ENCODE measurements at regions of chr3 and their contacts with region 1.

Region 1: DNA sequence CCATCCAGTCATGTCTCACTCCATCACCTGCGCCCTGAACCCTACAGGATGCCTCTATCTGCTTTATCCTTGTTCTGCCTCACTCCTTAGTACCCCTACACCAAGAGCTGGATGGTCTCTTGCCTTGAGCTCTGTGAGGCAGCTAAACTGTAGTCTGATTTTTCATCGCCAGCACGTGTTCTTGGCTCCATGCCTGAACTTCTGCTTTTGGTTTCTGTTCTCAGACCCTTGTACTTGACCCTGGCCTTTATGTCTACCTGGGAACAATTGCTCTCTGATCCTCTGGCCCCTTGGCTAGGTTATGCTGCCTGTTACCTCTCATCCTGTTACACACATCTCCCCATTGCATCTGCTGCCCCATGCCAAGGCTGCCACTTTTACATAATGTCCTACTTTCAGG is 318.0 kb upstream of the LMCD1 start:
- DNase-seq: no peak
- H3K4me3 ChIP-seq: no peak overlapping the region
- H3K27ac ChIP-seq: no peak overlapping the region
- H3K4me1 ChIP-seq: no peaks in the 10 kb centered on the region
- H3K27me3 ChIP-seq: no peaks in the 10 kb centered on the region
- CTCF ChIP-seq: no peak
- POLR2A ChIP-seq: no peak

Region 2: DNA sequence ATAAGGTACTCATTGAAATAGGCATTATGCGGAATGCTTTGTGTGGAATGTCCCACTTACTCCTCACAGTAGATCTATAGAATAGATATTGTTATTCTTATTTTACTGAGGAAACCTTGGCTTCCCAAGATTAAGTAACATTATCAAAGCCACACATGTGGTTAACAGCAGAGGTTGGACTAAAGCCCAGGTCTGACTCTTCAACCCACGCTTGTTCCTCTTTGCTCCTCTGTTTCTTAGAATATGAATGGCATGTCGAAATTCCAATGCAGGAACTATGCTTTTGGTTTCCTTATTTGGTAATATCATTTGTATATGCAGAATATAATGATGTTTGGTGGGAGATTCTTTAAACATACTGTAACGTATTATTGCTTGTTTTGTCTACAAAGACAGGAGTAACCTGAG is 500.8 kb before region 1 on chr3:
- intact Hi-C with region 1: no loop called
- DNase-seq: peak in 1 of 2 donors; percentile 75
- H3K4me3 ChIP-seq: no peak overlapping the region
- H3K27ac ChIP-seq: peak overlapping the region; percentile 54 to 72
- H3K4me1 ChIP-seq: no peaks in the 10 kb centered on the region
- H3K27me3 ChIP-seq: no peaks in the 10 kb centered on the region
- CTCF ChIP-seq: no peak
- POLR2A ChIP-seq: no peak

Region 3: DNA sequence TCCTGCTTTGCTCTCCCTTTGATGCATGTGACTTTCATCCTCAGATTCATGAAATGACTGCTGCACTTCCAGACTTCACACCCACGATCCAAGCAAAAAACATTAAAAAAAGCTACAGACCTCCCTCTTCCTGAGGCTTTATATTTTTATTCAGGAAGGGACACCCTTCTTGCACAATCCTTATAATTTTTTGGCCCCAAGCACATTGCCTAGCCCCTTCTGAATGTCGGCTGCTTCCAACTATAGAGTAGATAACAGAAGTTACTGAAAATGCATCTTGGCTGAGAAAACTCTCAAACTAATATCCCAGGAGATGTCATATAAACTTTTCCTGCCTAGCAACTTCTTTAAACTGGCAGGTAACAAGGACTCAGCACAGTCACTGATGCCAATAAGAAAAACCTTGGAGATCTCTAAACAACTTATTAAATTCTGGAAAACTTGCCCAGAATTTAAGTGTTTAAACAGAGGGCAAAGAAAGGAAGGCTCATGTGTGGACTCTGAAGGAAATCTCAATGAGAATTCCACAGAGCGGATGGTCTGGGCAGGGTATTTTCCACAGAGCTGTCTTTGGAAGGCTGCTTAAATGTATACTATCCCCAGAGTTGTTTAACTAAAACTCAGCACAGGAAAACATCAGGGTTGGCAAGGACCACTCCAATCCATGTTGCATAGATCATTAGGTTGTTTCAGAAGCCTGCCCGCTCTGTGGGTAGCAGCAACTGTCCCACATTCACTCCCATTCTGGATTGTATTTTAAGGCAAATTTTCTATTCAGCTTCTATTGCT is 428.8 kb before region 1 on chr3:
- intact Hi-C with region 1: loop called (anchors 5 kb)
- DNase-seq: no peak
- H3K4me3 ChIP-seq: no peak overlapping the region
- H3K27ac ChIP-seq: no peak overlapping the region
- H3K4me1 ChIP-seq: no peaks in the 10 kb centered on the region
- H3K27me3 ChIP-seq: no peaks in the 10 kb centered on the region
- CTCF ChIP-seq: no peak
- POLR2A ChIP-seq: no peak